Heart left ventricle (tissue), 16 donors: ENCODE measurements at regions of chr14 and their contacts with region 1.

Region 1: DNA sequence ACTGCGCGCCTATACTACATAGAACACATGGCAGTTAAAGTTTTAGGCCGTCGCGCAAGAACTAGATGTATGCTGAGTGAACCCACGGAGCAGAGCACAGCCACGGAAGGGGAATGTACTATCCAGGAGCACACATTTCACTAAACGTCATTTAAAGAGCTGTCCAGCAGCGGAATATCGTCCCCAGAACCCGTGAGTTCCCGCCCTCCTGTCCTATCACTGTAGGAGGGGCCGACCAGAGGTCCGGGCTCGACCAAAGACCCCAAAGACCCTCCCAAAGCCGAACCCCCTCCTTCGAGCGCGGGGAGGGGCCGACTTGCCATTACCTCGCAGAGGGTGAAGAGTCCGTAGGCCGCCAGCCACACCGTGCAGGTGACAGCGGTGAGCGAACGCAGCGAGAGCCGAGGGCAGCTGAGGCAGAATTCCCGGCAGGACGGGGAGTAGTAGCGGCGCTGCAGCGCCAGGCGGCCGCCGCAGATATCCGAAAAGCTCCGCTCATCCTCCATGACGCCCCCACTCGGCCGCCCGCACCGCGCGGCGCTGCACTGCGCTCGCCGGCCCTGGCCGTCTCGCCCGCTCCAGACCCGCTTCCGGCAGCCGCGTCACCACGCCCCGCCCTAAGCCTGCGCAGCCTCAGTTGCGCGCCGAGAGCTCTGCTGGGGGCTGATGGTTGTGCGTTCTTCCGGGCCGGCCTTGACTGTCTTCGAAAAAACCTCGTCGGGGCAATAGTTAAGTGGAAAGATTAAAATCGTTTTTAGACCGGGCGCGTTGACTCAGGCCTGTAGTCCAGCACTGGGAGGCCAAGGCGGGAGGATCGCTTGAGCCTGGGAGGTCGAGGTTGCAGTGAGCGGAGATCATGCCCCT is at the start of gene PIGH:
- DNase-seq: peak; percentile 89 to 96 (median 92)
- ATAC-seq: peak; percentile 98 to 100 (median 99)
- H3K4me3 ChIP-seq: peak within 1 kb of the TSS; percentile 55 to 99 (median 83)
- H3K27ac ChIP-seq: peak within 1 kb of the TSS; percentile 15 to 93 (median 85)
- H3K4me1 ChIP-seq: peaks cover 0 to 16% (median 6%) of the 10 kb centered on the region in 12 donors
- H3K27me3 ChIP-seq: no peaks in the 10 kb centered on the region
- CTCF ChIP-seq: peak; percentile 32 to 77 (median 58)
- POLR2A ChIP-seq: peak in 1 of 2 donors; percentile 79
- total RNA-seq, gene PIGH: 8.0 to 21.3 (median 11.4) TPM

Region 2: GRCh38 chr14:66782853-66783252 is 817.1 kb before region 1 on chr14:
- intact Hi-C with region 1: no loop called
- DNase-seq: no peak
- ATAC-seq: no peak
- H3K4me3 ChIP-seq: no peak overlapping the region
- H3K27ac ChIP-seq: no peak overlapping the region
- H3K4me1 ChIP-seq: no peaks in the 10 kb centered on the region
- H3K27me3 ChIP-seq: no peaks in the 10 kb centered on the region
- CTCF ChIP-seq: no peak
- POLR2A ChIP-seq: no peak

Region 3: DNA sequence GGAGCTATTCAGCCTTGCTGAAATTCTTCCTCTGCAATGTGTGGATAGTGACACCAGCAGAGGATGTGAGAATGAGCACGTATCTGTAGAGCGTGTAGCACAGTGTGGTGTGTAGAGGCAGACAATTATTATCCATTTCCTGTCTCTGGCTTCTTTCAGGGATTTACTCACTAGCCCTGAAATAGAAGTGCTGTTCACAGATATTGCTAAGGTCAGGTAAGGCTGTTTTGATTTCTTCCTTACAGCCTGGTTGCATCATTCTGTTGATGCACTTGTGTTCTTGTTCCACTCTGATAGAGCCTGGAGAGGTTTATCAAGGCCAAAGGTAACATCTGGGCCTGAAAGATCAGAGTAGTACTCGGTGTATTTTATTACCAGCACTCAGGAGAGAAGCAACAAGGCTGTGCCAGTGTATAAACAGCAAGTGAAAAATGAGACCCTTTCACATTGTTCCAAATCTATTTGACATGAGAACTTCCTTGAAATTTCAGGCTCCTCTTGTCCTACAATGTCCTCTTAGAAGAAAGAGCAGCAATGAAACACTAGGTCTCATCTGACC is 36.5 kb after region 1 on chr14:
- intact Hi-C with region 1: no loop called
- DNase-seq: no peak
- ATAC-seq: peak; percentile 89 to 97 (median 94)
- H3K4me3 ChIP-seq: no peak overlapping the region
- H3K27ac ChIP-seq: peak overlapping the region in 1 of 12 donors; percentile 33
- H3K4me1 ChIP-seq: peaks cover 0 to 9% (median 0%) of the 10 kb centered on the region in 12 donors
- H3K27me3 ChIP-seq: no peaks in the 10 kb centered on the region
- CTCF ChIP-seq: no peak
- POLR2A ChIP-seq: no peak

Region 4: GRCh38 chr14:67666750-67667449 is 67.0 kb after region 1 on chr14:
- intact Hi-C with region 1: loop called in 1 of 10 experiments (anchors 5 kb)
- DNase-seq: no peak
- ATAC-seq: peak in 3 of 4 donors; percentile 61 to 79 (median 66)
- H3K4me3 ChIP-seq: no peak overlapping the region
- H3K27ac ChIP-seq: peak overlapping the region in 1 of 12 donors; percentile 6
- H3K4me1 ChIP-seq: peaks cover 0 to 49% (median 2%) of the 10 kb centered on the region in 12 donors
- H3K27me3 ChIP-seq: no peaks in the 10 kb centered on the region
- CTCF ChIP-seq: peak; percentile 37 to 67 (median 56)
- POLR2A ChIP-seq: no peak

Region 5: DNA sequence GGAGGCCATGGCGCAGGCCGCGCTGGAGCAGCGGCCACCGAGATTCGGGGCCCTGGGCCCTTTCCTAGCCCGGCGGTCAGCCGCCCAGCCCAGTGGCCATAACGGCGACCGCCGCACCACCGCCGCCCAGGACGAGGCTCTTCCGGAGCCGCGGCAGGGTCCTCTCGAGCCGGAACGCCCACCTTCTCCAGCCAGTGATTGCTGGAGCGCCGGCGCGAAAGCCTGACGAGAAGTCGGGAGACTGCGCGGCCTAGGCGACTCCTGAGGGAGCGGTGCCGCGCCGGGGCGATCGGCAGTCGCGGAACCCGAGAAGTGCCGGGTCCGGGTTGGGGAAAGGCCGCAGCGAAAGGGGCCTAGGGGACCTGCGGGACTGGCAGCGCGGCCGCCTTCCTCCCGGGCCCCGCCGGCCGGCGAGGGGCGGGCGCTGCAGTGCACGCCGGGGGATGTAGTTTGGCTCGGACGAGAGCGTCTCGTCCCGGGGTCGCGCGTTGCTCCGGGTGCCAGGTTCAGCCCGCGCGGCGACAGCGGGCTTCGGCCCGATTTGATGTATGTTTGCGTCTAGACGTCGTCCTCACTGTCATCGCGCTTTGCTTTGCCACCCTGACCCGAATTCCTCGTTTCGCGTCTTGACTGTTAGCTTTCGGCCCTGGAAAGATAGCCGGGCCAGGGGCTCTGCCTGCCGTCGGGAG is 74.7 kb after region 1 on chr14 and contains the start of gene VTI1B:
- intact Hi-C with region 1: loop called in 2 of 10 experiments (anchors 2 to 5 kb)
- DNase-seq: peak; percentile 83 to 90 (median 88)
- ATAC-seq: peak; percentile 85 to 98 (median 96)
- H3K4me3 ChIP-seq: peak within 1 kb of the TSS; percentile 78 to 100 (median 92)
- H3K27ac ChIP-seq: peak within 1 kb of the TSS; percentile 96 to 99 (median 99)
- H3K4me1 ChIP-seq: peaks cover 3 to 44% (median 22%) of the 10 kb centered on the region in 12 donors
- H3K27me3 ChIP-seq: no peaks in the 10 kb centered on the region
- CTCF ChIP-seq: peak in 4 of 12 donors; percentile 22 to 47 (median 30)
- POLR2A ChIP-seq: peak in 1 of 2 donors; percentile 65
- total RNA-seq, gene VTI1B: 78.5 to 143 (median 128) TPM

Region 6: GRCh38 chr14:67749341-67750084 is 149.6 kb after region 1 on chr14:
- intact Hi-C with region 1: no loop called
- DNase-seq: no peak
- ATAC-seq: no peak
- H3K4me3 ChIP-seq: no peak overlapping the region
- H3K27ac ChIP-seq: no peak overlapping the region
- H3K4me1 ChIP-seq: no peaks in the 10 kb centered on the region
- H3K27me3 ChIP-seq: no peaks in the 10 kb centered on the region
- CTCF ChIP-seq: no peak
- POLR2A ChIP-seq: no peak